Activated T-helper 2 cell treated with anti-CD3 and anti-CD28 coated beads, Interferon-gamma antibody, Interleukin-2, Interleukin-4, amounts not matched to agents 10 μg/mL and 5 μg/mL and 100 μg/mL, durations not matched to agents 14 hours and 24 hours and 36 hours (primary cell): ENCODE measurements at regions of chr6 and their contacts with region 1.

Region 1: DNA sequence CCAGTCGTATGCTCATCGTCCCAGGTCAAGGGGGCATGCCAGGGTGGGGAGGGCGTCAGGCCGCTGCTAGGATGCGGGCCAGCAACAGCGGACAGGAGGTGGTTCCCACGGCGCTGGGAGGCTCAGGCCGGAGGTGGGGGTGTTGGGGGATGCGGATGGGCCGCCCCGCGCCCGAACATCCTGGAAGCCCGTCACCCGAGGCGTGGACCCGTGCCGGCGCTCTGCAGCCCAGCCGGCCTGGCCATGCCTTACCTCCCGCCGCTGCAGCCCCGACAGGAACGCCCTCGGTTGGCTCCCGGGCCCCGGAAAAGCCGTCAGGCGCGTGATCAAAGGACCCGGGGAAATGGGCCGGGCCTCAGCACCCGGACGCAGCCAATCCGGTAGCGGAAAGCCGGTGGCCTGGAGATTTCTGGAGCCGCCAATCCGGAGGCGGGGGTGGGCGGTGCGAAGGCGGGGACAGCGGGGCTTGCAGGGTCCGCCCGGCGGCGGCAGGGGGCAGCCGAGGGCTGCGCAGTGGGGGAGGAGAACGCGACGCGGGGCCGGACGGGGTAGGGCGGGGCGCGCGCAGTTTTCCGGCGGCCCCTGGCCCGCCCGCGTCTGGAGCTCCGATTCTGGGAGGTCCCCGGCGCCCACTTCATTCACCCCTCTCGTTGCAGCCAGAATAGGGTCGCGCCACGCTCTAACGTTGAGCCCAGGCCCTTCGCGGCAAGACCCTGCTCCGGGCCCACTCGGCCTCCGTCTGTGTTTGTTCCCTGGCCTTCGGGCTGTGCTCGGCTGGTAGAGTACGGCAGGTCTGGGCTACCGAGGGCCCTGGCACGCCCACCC is at the start of gene SMIM29:
- DNase-seq: peak; percentile 97
- H3K4me3 Mint-ChIP-seq: peak within 1 kb of the TSS; percentile 82
- H3K27ac Mint-ChIP-seq: peak within 1 kb of the TSS; percentile 77
- H3K4me1 Mint-ChIP-seq: peaks cover 30% of the 10 kb centered on the region
- H3K27me3 Mint-ChIP-seq: peaks cover 5% of the 10 kb centered on the region
- total RNA-seq, gene SMIM29: 16.6 and 17.3 TPM in 2 replicates

Region 2: DNA sequence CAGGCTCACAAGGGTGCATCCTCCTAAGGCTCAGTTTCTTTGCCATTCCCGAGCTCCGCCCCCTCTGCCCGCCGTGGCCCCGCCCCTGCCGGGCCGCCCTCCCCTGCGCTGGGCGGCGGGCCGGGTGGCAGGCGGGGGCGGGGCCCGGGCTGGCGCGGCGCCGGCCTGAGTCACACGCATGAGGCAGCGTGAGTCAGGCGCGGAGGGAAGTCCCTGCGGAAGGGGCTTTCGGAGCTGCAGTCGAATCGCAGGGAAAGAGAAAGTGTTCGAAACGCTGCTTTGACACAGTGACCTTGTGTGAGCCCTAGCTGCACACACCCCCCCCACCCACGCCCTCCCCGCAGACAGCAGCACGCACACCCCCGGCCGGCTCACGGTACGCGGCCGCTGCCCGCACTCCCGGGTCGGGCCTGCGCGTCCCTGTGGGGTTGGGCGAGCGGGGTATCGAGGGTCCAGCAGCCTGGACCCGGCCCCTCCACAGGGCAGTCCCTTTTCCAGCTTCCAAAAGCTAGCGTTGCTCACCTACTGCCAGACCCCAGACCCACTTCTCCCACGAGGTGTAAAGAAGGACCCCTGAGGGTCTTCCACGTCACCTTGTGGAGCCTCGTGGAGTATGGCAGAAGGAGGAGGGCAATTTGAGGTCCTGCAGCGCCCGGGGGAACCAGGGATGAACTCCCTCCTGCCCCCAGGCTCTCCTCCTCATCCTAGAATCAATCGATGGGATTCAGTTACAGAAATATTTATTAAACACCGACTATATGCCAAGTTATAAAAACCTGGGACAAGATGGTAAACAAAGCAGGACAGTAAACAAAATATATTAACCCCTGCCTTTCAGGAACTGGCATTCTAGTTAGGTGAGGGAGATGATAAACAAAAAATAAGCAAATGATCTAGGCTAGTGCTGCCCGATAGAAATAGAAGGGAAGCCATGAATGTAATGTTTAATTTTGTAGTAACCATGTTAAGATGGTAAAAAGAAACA is 24.7 kb before region 1 on chr6:
- intact Hi-C with region 1: loop called (anchors 2 kb)
- DNase-seq: peak; percentile 91
- H3K4me3 Mint-ChIP-seq: peak overlapping the region; percentile 60
- H3K27ac Mint-ChIP-seq: peak overlapping the region; percentile 84
- H3K4me1 Mint-ChIP-seq: peaks cover 24% of the 10 kb centered on the region
- H3K27me3 Mint-ChIP-seq: peaks cover 3% of the 10 kb centered on the region

Region 3: DNA sequence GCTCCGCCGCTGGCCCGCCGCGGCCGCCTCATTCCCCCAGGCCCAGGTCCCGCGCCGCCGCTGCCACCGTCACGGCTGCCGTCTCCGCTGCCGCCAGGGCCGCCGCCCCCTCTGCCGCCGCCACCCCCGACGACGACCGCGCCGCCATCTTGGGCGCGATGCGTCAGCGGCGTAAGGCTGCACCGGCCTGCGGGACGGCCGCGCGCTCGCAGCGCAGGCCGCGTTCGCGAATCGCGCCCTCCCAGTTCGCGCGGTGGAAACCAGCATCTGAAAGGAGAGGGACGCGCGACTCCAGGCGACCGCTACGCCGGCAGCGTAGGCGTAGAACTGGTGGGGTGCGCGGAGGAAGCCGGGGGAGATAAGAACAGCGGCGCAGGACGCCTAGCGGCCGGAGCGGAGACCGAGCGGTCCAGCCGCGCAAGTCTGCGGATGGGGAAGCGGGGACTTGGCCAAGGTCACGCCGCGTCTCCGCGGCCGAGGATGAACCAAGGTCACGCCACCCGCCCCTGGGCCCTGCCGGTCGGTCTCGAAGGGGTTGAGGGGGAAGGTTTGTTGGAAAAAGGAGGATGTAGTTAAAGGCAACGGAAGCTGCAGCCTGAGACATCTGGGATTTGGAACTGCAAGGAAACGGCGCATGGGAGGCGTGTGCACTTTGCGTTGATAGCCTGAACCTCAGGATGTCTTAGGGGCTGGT is 143.7 kb after region 1 on chr6 and contains the start of gene NUDT3:
- intact Hi-C with region 1: loop called (anchors 1 kb)
- DNase-seq: peak; percentile 92
- H3K4me3 Mint-ChIP-seq: peak within 1 kb of the TSS; percentile 86
- H3K27ac Mint-ChIP-seq: peak within 1 kb of the TSS; percentile 68
- H3K4me1 Mint-ChIP-seq: peaks cover 6% of the 10 kb centered on the region
- H3K27me3 Mint-ChIP-seq: no peaks in the 10 kb centered on the region
- total RNA-seq, gene NUDT3: 21.3 and 21.7 TPM in 2 replicates

Region 4: DNA sequence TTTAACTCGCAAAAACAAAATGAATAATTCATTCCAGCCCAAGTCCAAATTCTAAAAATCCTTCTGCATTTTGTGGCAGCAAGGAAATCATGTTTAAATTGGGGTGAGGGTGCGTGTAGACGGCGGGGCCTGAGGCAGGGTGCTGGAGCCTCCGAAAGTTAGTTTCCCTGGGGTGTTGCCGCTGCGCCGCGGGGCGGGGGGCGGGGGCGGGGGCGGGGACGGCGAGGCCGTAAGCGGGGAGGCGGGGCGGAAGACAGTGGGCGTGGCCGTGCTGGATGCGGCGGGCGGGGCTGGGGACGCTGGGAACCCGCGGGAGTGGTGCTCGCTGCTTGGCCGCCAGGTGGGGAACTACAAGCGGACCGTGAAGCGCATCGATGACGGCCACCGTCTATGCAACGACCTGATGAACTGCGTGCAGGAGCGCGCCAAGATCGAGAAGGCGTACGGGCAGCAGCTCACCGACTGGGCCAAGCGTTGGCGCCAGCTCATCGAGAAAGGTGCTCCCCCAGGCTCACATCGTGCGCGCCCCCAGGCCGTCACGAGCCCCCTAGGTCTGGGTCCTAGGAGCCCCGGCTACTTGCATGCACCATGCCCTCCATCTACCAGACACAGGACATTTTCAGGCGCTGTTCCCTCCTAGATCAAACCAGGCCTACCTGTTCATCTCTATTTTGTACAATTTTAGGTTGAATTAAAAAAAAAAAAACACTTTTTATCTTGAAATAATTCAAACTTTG is 278.2 kb after region 1 on chr6:
- intact Hi-C with region 1: loop called (anchors 5 kb)
- DNase-seq: peak; percentile 93
- H3K4me3 Mint-ChIP-seq: peak overlapping the region; percentile 10
- H3K27ac Mint-ChIP-seq: no peak overlapping the region
- H3K4me1 Mint-ChIP-seq: peaks cover 3% of the 10 kb centered on the region
- H3K27me3 Mint-ChIP-seq: peaks cover 5% of the 10 kb centered on the region

Region 5: DNA sequence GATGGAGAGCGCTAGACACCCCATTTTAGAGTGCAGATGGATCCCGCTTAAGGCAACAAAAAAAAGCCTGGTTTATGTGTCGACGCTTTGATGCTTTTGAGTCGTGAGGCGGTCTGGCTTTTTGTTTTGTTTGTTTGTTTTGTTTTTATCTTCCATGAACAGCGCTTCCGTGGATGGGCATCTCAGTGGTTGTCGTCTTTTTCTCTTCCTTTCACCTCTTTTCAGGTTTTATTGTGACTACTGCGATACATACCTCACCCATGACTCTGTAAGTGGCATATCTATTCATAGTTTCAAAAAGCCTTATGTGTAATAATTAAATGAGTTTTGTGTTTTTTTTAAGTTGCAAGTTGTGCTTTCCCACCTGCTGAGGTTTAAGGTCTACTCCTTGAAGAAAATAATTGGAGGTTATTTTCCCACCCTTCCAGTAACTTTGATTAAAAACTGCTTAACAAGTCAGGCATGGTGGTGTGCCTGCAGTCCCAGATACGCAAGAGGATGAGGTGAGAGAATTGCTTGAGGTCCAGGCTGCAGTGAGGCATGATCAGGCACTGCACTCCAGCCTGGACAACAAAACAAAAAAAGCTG is 508.8 kb after region 1 on chr6:
- intact Hi-C with region 1: loop called (anchors 10 kb)
- DNase-seq: no peak
- H3K4me3 Mint-ChIP-seq: no peak overlapping the region
- H3K27ac Mint-ChIP-seq: no peak overlapping the region
- H3K4me1 Mint-ChIP-seq: peaks cover 8% of the 10 kb centered on the region
- H3K27me3 Mint-ChIP-seq: no peaks in the 10 kb centered on the region